ENCODE measurements at regions of chr5 and their contacts with region 1.

Region 1: GRCh38 chr5:42423285-42424165 is at the start of gene GHR:
- DNase-seq: peak; percentile 94
- ATAC-seq: peak; percentile 85
- H3K4me3 ChIP-seq: peak within 1 kb of the TSS; percentile 73
- H3K27ac ChIP-seq: peak within 1 kb of the TSS; percentile 12; the same call in 1 of the 2 replicates
- H3K4me1 ChIP-seq: peaks cover 10% of the 10 kb centered on the region; the same call in 1 of the 2 replicates
- H3K27me3 ChIP-seq: no peaks in the 10 kb centered on the region
- CTCF ChIP-seq: peak; percentile 84
- total RNA-seq, gene GHR: 2.2 and 5.2 TPM in 2 replicates

Region 2: DNA sequence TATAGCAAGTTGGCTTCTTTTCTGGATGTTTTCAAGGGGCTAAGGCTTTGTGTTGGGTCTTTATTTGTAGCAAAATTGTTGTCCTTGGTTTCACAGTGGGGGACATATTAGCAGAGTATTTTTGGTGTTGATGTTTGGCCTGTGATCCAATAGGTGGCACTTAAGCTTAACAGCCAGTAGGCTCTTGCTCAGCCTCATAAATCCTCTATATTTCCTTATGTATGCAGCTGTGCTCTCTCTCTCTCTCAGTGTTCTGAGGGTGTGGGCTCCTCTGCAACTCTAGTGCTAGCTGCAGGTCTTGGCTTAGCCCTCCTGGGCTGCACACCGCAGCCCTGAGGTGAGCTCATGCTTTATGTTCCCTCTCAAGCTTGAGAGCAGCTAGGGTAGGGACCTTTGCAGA is 195.2 kb before region 1 on chr5:
- CTCF ChIA-PET with region 1: interaction called, 6 read pairs
- POLR2A ChIA-PET with region 1: no interaction called
- intact Hi-C with region 1: loop called (anchors 1 kb)
- DNase-seq: peak; percentile 69
- ATAC-seq: peak; percentile 98
- H3K4me3 ChIP-seq: no peak overlapping the region
- H3K27ac ChIP-seq: no peak overlapping the region
- H3K4me1 ChIP-seq: peaks cover 5% of the 10 kb centered on the region; the same call in 1 of the 2 replicates
- H3K27me3 ChIP-seq: no peaks in the 10 kb centered on the region
- CTCF ChIP-seq: peak; percentile 78

Region 3: GRCh38 chr5:42301349-42301748 is 122.2 kb before region 1 on chr5:
- CTCF ChIA-PET with region 1: no interaction called
- POLR2A ChIA-PET with region 1: no interaction called
- intact Hi-C with region 1: loop called (anchors 5 kb)
- DNase-seq: peak; percentile 98
- ATAC-seq: peak; percentile 90
- H3K4me3 ChIP-seq: peak overlapping the region; percentile 26
- H3K27ac ChIP-seq: peak overlapping the region; percentile 79
- H3K4me1 ChIP-seq: peaks cover 28% of the 10 kb centered on the region
- H3K27me3 ChIP-seq: no peaks in the 10 kb centered on the region
- CTCF ChIP-seq: no peak

Region 4: GRCh38 chr5:42461507-42461906 is 38.0 kb after region 1 on chr5:
- CTCF ChIA-PET with region 1: interaction called, 3 read pairs
- POLR2A ChIA-PET with region 1: interaction called, 20 read pairs
- intact Hi-C with region 1: no loop called
- DNase-seq: no peak
- ATAC-seq: no peak; the same call in 1 of the 2 replicates
- H3K4me3 ChIP-seq: no peak overlapping the region
- H3K27ac ChIP-seq: no peak overlapping the region
- H3K4me1 ChIP-seq: no peaks in the 10 kb centered on the region
- H3K27me3 ChIP-seq: no peaks in the 10 kb centered on the region
- CTCF ChIP-seq: no peak

Region 5: GRCh38 chr5:42636425-42636824 is 212.9 kb after region 1 on chr5:
- CTCF ChIA-PET with region 1: no interaction called
- POLR2A ChIA-PET with region 1: no interaction called
- intact Hi-C with region 1: loop called (anchors 5 kb)
- DNase-seq: peak; percentile 76
- ATAC-seq: no peak
- H3K4me3 ChIP-seq: no peak overlapping the region
- H3K27ac ChIP-seq: no peak overlapping the region
- H3K4me1 ChIP-seq: peaks cover 20% of the 10 kb centered on the region
- H3K27me3 ChIP-seq: no peaks in the 10 kb centered on the region
- CTCF ChIP-seq: peak; percentile 87

Region 6: DNA sequence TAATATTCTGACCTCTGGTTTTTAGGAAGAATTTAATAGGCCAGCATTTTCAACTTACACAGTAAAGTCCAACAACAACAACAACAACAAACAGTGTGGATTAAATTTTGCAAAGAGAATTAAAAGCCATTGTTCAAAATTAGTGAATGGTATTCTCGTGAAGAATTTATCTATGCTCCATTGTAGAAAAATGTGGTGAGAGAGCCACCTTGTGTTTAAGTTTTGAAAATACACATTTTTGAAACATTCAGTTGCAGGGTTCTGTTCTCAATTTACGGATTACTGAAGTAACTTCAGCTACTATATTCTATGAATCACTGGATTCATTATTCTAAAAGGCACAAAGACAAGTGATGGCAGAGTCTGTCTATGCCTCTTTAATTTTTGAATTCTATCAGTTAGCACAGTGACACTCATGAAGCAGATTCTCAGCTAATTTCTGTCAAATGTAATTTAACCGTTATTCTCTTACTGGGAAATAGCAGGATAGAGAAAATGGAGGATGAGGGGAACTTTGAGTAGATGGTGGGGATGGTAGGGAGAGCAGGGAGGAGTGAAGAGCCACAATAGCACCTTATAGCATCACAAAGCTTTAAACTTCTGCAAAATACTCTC is 344.1 kb after region 1 on chr5:
- CTCF ChIA-PET with region 1: no interaction called
- POLR2A ChIA-PET with region 1: no interaction called
- intact Hi-C with region 1: loop called (anchors 2 kb)
- DNase-seq: peak; percentile 74
- ATAC-seq: peak; percentile 57
- H3K4me3 ChIP-seq: no peak overlapping the region
- H3K27ac ChIP-seq: no peak overlapping the region
- H3K4me1 ChIP-seq: peaks cover 16% of the 10 kb centered on the region
- H3K27me3 ChIP-seq: no peaks in the 10 kb centered on the region
- CTCF ChIP-seq: peak; percentile 89

Region 7: GRCh38 chr5:42825422-42826148 is 402.1 kb after region 1 on chr5:
- CTCF ChIA-PET with region 1: no interaction called
- POLR2A ChIA-PET with region 1: no interaction called
- intact Hi-C with region 1: no loop called
- DNase-seq: no peak
- ATAC-seq: no peak
- H3K4me3 ChIP-seq: no peak overlapping the region
- H3K27ac ChIP-seq: no peak overlapping the region
- H3K4me1 ChIP-seq: no peaks in the 10 kb centered on the region
- H3K27me3 ChIP-seq: no peaks in the 10 kb centered on the region
- CTCF ChIP-seq: no peak